ENCODE measurements at regions of chr17 and their contacts with region 1.

Region 1: DNA sequence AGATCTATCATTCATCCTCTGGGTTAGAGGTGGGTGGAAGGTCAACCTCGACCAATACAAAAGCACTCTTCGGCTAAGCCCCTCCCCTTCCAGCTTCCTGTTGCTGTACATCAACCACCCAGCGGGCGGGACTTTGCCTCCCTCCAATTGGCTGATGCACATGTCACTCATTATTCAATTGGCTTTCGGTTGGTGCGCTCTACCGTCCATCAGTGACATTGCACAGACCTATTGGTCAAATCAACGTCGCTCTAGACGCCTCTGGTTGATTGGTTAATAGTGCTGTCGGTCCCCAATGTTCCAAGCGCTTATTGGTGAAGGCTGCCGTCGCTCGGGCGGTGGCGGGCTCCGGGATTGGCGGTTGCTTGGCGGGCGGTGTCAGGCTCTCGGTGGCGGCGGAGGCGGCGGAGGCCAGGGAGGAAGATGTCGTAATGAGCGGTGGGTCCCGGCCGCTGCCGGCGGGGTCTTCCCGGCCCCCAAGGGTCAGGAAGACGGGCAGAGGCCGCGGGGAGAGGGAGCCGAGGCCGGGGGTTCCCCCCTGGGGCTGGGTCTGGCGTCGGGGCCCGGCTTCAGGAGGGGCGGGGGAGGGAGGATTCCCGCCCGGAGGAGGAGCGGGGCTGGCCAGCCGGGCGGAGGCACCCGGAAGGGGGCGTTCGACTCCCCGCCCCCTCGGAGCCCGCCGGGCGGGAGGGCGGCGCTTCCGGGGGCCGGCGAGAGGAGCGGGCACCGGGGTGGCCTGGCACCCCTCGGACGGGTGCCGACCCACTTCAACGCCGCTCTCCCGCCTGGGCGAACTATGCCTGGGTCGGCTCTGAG is at the start of gene SP2:
- DNase-seq: peak; percentile 100
- ATAC-seq: peak; percentile 95
- H3K4me3 ChIP-seq: peak within 1 kb of the TSS; percentile 79 to 96 (median 83)
- H3K27ac ChIP-seq: peak within 1 kb of the TSS; percentile 88
- H3K4me1 ChIP-seq: peaks cover 37% of the 10 kb centered on the region
- H3K27me3 ChIP-seq: no peaks in the 10 kb centered on the region; a peak in 1 of 5 replicates
- CTCF ChIP-seq: peak; percentile 23; the same call in 1 of the 2 replicates
- EP300 ChIP-seq: no peak
- POLR2A ChIP-seq: peak; percentile 74 to 91
- RAD21 ChIP-seq: peak; percentile 69
- total RNA-seq, gene SP2: 1.4 and 1.5 TPM in 2 replicates

Region 2: GRCh38 chr17:47831003-47831933 is 64.8 kb before region 1 on chr17 and contains the starts of genes LRRC46 and MRPL10:
- CTCF ChIA-PET with region 1: no interaction called
- POLR2A ChIA-PET with region 1: interaction called, 44 read pairs
- in situ Hi-C with region 1: no loop called
- intact Hi-C with region 1: no loop called
- DNase-seq: peak; percentile 91
- ATAC-seq: peak; percentile 95
- H3K4me3 ChIP-seq: peak within 1 kb of the TSS; percentile 81 to 97 (median 82)
- H3K27ac ChIP-seq: peak within 1 kb of the TSS; percentile 69
- H3K4me1 ChIP-seq: peaks cover 23% of the 10 kb centered on the region
- H3K27me3 ChIP-seq: peaks cover 0 to 5% of the 10 kb centered on the region in 2 experiments; a peak in 1 of 5 replicates
- CTCF ChIP-seq: peak; percentile 59
- EP300 ChIP-seq: peak in 1 of 2 experiments; percentile 24; a peak in 1 of 4 replicates
- POLR2A ChIP-seq: peak; percentile 96 to 98
- RAD21 ChIP-seq: peak; percentile 25; the same call in 1 of the 2 replicates
- total RNA-seq, gene LRRC46: 0.09 and 0.13 TPM in 2 replicates
- total RNA-seq, gene MRPL10: 56.7 and 59.7 TPM in 2 replicates

Region 3: GRCh38 chr17:47850692-47851573 is 45.1 kb before region 1 on chr17 and contains the start of gene SP6:
- CTCF ChIA-PET with region 1: no interaction called
- POLR2A ChIA-PET with region 1: interaction called, 28 read pairs
- in situ Hi-C with region 1: no loop called
- intact Hi-C with region 1: no loop called
- DNase-seq: peak; percentile 77
- ATAC-seq: peak; percentile 97
- H3K4me3 ChIP-seq: peak within 1 kb of the TSS; percentile 44 to 74 (median 54)
- H3K27ac ChIP-seq: no peak within 1 kb of the TSS
- H3K4me1 ChIP-seq: peaks cover 12% of the 10 kb centered on the region
- H3K27me3 ChIP-seq: peaks cover 19 to 72% of the 10 kb centered on the region in 2 experiments
- CTCF ChIP-seq: peak; percentile 72
- EP300 ChIP-seq: no peak
- POLR2A ChIP-seq: peak; percentile 30 to 75; a peak in 3 of 4 replicates
- RAD21 ChIP-seq: peak; percentile 76
- total RNA-seq, gene SP6: 0.07 TPM in 1 of 2 replicates, not detected in the other

Region 4: DNA sequence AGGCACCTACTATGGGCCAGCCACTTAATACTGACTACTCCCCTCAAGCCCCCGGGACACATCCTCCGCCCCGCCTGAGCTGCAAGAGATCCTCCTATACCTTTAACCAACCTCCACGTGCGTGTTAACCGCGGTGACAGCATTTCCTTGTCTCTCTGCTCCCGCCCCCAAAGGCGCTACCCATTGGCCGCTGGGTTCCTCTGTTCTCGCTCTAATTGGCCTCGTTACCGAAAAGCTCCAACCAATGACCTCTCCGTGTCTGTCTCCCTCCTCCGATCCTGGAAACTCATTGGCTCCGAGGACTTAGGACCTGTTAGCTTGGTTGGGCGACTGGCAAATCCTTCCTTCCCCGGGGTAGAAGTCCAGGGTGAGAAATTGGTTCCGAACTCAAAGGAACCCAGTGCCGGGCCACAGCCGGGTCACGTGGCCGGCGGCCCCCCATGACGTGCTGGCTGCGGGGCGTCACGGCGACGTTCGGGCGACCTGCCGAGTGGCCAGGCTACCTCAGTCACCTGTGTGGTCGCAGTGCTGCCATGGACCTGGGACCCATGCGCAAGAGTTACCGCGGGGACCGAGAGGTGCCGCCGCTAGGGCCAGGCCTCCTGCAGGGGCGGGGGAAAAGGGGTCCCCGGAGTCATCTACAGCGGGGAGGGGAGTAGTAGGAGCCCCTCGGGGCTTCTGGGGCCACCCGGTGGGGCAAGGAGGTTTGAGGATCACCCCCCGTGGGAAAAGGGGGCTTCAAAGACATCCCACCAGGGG is 45.4 kb after region 1 on chr17 and contains the start of gene PNPO:
- CTCF ChIA-PET with region 1: no interaction called
- POLR2A ChIA-PET with region 1: interaction called, 45 read pairs
- in situ Hi-C with region 1: no loop called
- intact Hi-C with region 1: no loop called
- DNase-seq: peak; percentile 100
- ATAC-seq: peak; percentile 96
- H3K4me3 ChIP-seq: peak within 1 kb of the TSS; percentile 75 to 87 (median 76)
- H3K27ac ChIP-seq: peak within 1 kb of the TSS; percentile 95
- H3K4me1 ChIP-seq: peaks cover 75% of the 10 kb centered on the region
- H3K27me3 ChIP-seq: no peaks in the 10 kb centered on the region
- CTCF ChIP-seq: peak; percentile 35; the same call in 1 of the 2 replicates
- EP300 ChIP-seq: no peak; a peak in 1 of 4 replicates
- POLR2A ChIP-seq: peak; percentile 73 to 81; a peak in 3 of 4 replicates
- RAD21 ChIP-seq: peak; percentile 69
- total RNA-seq, gene PNPO: 63.3 and 110 TPM in 2 replicates

Region 5: DNA sequence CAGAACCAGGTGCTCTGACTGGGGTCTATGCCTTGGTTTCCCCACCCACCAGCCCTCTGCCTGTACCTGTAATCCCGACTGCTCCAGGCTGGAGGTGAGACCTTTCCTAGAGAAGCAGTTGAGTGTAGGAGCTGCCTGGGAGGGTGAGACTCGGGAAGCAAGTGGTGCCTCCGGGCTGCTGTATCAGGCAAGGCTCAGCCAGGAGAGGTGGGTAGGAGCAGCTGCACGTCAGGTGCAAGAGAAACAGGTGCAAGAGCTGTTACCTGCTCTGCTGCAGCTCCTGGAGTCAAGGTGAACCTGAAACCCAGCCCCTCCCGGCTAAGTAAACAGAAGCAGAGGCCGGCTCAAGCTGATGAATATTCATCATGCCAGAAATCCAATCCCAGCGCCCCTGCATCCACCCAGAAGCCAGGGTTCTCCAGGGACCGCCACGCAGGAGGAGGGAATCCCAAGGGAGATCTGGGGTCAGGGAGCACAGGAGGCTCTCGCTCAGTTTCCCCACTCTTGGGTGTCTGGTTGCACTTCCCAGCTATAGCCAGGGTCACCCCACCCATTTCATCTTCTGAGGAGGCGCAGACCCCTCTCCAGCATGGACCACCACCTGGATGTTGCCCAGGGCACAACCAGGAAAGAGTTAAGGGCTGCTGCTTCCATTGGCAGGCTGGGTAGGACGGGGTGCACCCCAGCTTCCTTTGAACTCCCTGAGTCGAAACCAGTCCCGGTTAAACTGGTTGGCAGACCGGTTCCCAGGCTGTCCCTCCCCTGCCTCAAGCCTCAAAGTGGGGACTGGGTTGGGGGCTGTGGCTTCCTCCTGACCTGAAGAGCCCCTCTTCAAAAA is 61.7 kb after region 1 on chr17 and contains the start of gene PRR15L:
- CTCF ChIA-PET with region 1: no interaction called
- POLR2A ChIA-PET with region 1: interaction called, 17 read pairs
- in situ Hi-C with region 1: no loop called
- intact Hi-C with region 1: no loop called
- DNase-seq: no peak
- ATAC-seq: peak; percentile 53
- H3K4me3 ChIP-seq: peak within 1 kb of the TSS; percentile 33 to 61 (median 38)
- H3K27ac ChIP-seq: no peak within 1 kb of the TSS
- H3K4me1 ChIP-seq: peaks cover 64% of the 10 kb centered on the region
- H3K27me3 ChIP-seq: peaks cover 0 to 2% of the 10 kb centered on the region in 2 experiments; a peak in 4 of 5 replicates
- CTCF ChIP-seq: no peak
- EP300 ChIP-seq: no peak
- POLR2A ChIP-seq: no peak
- RAD21 ChIP-seq: no peak
- total RNA-seq, gene PRR15L: 2.0 and 2.4 TPM in 2 replicates

Region 6: GRCh38 chr17:48024937-48025906 is 129.2 kb after region 1 on chr17:
- CTCF ChIA-PET with region 1: no interaction called
- POLR2A ChIA-PET with region 1: no interaction called
- in situ Hi-C with region 1: no loop called
- intact Hi-C with region 1: loop called (anchors 5 kb)
- DNase-seq: peak; percentile 94
- ATAC-seq: peak; percentile 82
- H3K4me3 ChIP-seq: peak overlapping the region; percentile 52 to 77 (median 57)
- H3K27ac ChIP-seq: no peak overlapping the region
- H3K4me1 ChIP-seq: peaks cover 41% of the 10 kb centered on the region
- H3K27me3 ChIP-seq: peaks cover 4 to 27% of the 10 kb centered on the region in 2 experiments
- CTCF ChIP-seq: peak; percentile 99
- EP300 ChIP-seq: 0 out of 4 replicates have a peak, but pooled peaks of 1 of the 2 experiments have one; percentile 40
- POLR2A ChIP-seq: no peak
- RAD21 ChIP-seq: peak; percentile 99